Mucosa of descending colon (tissue), 3 donors: ENCODE measurements at regions of chr2 and their contacts with region 1.

Region 1: DNA sequence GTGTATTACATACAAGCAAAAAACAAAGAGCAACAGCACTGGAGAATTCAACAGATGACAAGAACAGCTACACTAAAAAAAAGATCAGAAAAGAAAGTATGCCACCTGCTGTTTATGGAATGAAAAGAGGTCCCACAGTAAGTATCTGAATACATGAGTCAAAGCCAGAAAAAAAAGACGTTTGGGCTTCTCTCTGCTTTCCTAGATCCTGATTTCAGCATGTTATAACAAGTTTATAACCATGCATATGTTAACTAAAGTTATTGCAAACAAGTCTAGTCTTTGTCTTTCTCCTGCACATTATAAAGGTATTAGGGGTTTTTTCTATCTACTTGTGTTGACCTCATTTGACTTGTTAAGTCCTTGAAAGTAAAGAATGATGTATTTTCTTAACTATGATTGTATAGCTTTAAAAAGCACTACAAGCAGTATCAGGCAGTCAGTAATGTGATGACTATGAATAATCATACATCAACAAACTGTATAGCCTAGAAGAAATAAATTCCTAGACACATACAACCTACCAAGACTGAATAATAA is 108.5 kb upstream of the COL5A2 start:
- DNase-seq: no peak
- ATAC-seq: peak; percentile 33
- H3K4me3 ChIP-seq: no peak overlapping the region
- H3K4me1 ChIP-seq: no peaks in the 10 kb centered on the region
- CTCF ChIP-seq: no peak

Region 2: GRCh38 chr2:189142893-189143759 is 144.9 kb before region 1 on chr2:
- intact Hi-C with region 1: loop called in 1 of 2 experiments (anchors 5 kb)
- DNase-seq: peak in 1 of 3 donors; percentile 77
- ATAC-seq: peak; percentile 86
- H3K4me3 ChIP-seq: no peak overlapping the region
- H3K4me1 ChIP-seq: no peaks in the 10 kb centered on the region
- CTCF ChIP-seq: peak; percentile 45